Cardiac septum (tissue), 1 donor: ENCODE measurements at regions of chr1 and their contacts with region 1.

Region 1: DNA sequence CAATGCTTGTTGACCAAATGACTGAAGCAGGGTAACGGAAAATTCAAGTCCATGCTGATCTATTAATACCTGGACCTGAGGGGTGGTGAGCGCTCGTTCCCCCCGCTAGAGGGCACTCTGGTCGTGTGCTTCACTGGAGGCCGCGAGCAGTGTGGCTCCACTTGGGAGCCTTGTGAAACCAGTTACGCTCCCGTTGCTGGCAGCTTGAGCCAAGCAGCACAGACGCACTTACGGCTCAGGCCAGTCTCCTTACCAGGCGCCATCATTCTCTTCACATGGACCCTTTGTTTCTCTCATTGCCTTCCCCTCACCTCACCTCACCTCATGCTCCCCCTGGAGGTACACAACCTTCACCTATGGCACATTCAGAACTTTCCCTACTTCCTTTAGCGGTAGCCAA is 49.7 kb upstream of the TSPAN2 start:
- DNase-seq: peak; percentile 89

Region 2: GRCh38 chr1:115184951-115185331 is 46.0 kb after region 1 on chr1:
- intact Hi-C with region 1: loop called (anchors 5 kb)
- DNase-seq: no peak

Region 3: DNA sequence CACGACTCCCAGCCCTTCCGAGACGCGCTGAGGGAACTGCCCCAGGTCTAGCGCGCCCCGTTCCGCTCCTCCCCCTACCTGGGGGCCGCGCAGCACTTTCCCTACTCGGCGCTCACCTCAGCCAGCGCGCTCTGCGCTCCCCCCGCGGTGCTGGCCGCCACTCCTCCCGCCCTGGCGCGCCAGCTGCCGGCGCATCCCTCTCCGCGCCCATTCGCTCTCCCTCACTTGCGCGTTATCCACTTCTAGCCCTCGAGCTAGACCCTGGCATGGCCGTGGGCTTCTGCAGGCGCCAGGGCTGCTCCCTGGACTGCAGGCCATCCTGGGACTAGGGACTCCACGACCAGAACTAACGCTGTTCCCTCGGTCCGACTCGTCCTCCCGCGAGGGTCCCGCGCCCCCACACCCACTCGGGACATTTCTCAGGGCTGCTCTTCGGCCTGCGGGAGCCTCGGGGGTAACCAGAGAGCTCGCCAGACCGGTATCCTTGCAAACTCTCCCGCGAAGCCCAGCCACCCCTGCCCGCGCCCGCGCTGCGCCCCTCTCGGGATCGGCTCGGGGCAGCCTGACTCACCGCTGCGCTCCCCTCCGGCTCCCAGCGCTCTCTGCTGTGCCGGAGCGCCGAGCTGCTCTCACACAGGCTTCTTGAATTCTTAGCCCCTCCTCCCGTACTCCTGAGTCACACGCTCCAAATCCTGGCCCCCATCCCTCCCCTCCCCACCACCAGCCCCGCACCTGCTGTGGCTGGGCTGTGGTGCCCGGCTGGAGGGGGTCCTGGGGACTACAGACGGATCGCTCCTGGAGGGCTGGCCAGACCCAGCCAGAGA is 198.9 kb after region 1 on chr1 and contains the start of gene NGF:
- intact Hi-C with region 1: loop called (anchors 5 kb)
- DNase-seq: no peak
- total RNA-seq, gene NGF: 2.1 TPM

Region 4: GRCh38 chr1:115469703-115470476 is 330.9 kb after region 1 on chr1:
- intact Hi-C with region 1: loop called (anchors 2 kb)
- DNase-seq: no peak

Region 5: DNA sequence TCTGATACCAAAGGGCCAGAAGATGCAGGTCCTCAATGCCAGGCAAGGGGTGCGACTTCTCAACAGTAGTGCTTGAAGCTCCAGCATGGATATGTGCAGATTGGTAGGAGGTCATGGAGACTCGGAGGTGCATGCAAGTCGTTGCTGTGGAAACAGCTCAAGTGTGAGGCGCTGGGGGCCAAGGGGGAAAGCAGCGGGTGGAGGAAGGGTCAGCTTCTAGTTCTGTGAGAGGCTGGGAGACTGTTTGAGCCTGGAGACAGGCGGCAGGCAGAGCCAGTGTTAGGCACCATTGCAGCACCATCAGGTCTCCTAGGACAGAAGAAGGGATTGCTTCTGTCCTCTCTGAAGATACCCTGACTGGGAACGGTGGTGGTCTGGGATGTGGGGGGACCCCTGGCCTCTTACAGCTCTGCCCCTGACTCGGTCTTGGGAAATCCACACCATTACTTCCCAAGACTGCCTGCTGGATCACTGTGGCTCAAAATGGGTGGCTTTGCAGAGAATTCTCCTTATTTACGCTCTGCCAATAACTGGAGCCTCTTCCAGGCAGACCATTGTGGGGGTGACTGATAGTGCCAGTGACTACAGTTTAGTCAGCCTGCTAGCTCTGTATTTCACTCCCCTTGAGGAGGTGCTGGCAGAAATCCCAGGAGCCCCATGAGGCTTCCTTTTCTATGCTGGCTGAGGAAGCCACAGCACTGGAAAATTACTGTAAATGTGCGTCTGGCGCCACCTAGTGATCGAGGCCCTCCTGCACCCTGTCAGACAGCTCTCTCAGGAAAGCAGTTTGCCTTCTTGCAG is 456.5 kb after region 1 on chr1:
- intact Hi-C with region 1: loop called (anchors 1 kb)
- DNase-seq: peak; percentile 88